Psoas muscle (tissue), 8 donors: ENCODE measurements at regions of chr4 and their contacts with region 1.

Region 1: DNA sequence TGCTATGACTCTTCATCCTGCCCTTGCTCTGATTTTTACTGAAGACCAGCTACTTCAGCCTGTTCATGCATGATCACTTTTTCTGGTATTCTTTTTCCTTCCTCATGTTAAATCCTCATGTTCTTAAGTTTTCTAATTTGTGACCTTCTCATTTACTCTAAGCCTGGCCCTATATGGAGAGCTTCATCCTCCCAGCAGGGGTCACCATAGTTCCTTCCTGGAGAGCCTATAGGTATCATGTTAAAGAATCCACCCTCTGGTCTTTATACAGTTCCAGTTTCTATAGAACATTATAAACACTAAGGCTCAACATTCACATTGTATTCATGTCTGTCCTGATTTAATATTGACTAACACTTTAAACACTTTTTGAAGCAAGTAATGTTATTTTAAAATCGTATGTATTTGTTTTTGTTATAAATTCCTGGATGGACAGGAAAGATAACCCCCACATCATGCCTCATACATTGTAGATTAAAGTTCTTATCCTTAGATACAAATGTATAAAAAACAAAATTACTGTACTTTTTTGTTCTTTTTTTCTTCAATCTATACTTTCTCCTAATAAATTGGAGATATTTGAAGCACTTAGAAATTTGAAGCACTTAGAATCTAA is 53.8 kb upstream of the OTUD4 start:
- DNase-seq: no peak
- ATAC-seq: peak; percentile 74 to 91 (median 81)
- H3K4me3 ChIP-seq: no peak overlapping the region
- H3K27ac ChIP-seq: no peak overlapping the region
- H3K4me1 ChIP-seq: peaks cover 12% of the 10 kb centered on the region
- H3K27me3 ChIP-seq: no peaks in the 10 kb centered on the region
- CTCF ChIP-seq: peak; percentile 82

Region 2: DNA sequence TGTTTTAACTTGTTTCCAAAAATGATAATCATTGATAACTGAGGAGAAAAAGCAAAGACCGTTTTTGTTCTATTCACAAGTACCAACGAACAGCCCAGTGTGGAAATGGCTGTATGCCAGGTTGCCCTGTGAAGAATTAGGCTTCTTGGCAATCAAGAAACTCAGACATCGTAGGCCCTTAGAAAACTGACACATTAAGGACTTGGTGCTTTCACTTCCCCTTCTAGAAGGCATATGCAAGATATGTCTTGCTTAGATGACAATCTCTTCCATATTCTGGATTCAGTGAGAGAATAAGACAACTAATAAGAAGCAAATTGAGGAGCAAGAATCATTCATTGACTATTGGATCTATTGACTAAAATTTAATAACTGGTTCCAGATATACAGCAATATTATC is 192.8 kb before region 1 on chr4:
- intact Hi-C with region 1: no loop called
- DNase-seq: no peak
- ATAC-seq: no peak
- H3K4me3 ChIP-seq: no peak overlapping the region
- H3K27ac ChIP-seq: no peak overlapping the region
- H3K4me1 ChIP-seq: no peaks in the 10 kb centered on the region
- H3K27me3 ChIP-seq: no peaks in the 10 kb centered on the region
- CTCF ChIP-seq: no peak

Region 3: DNA sequence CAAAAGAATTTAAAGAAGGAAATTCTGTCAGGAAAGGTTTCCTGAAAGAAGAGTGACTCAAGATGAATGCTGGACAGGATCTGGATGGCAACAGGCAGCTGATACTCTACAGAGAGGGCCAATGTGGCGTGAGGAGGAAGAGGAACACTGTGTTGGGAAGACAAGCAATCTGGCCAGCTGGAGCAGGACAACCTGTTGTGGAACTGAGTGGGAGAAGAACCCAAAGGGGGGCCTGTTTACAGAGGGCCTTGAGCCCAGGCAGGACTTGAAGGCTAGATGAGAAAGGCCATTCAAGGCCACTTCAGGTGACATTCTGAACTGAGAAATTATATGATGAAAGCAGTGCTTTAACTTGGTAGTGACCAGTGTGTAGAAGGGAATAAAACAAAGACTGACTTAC is 62.3 kb before region 1 on chr4:
- intact Hi-C with region 1: no loop called
- DNase-seq: no peak
- ATAC-seq: peak; percentile 50 to 74 (median 66)
- H3K4me3 ChIP-seq: no peak overlapping the region
- H3K27ac ChIP-seq: peak overlapping the region; percentile 38
- H3K4me1 ChIP-seq: peaks cover 35% of the 10 kb centered on the region
- H3K27me3 ChIP-seq: no peaks in the 10 kb centered on the region
- CTCF ChIP-seq: no peak

Region 4: DNA sequence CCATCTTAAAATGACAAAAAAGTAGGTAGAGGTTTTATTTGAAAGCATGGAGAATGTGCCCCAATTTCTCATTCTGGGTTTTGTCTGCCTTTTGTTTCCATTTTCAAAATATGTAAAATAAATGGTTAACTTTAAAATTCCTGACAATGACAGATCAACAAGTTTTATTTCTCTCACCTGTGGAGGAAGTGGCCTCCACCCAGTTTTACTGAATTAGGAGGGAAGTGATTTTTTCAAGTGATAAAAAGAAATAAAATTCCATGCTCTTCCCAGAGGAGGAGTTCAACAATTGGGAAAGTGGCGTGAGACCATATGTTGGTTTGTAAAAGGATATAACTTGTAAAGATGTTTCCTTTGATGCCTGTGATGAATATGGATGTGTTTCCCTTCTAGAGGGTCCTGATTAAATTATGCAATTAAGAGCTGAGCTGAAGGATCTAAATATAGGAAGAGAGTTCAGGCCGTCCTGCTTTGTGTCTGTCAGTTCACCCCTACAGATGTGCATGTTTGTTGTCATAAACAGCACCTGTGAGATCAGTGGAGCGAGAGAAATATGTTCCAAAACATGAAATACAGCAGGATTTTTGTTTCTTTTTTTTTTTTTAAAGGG is 267.0 kb after region 1 on chr4:
- intact Hi-C with region 1: no loop called
- DNase-seq: no peak
- ATAC-seq: peak in 1 of 4 donors; percentile 38
- H3K4me3 ChIP-seq: peak overlapping the region; percentile 4
- H3K27ac ChIP-seq: no peak overlapping the region
- H3K4me1 ChIP-seq: peaks cover 59% of the 10 kb centered on the region
- H3K27me3 ChIP-seq: no peaks in the 10 kb centered on the region
- CTCF ChIP-seq: no peak

Region 5: GRCh38 chr4:145557720-145558119 is 323.5 kb after region 1 on chr4:
- intact Hi-C with region 1: loop called (anchors 2 to 5 kb)
- DNase-seq: peak; percentile 44 to 55
- ATAC-seq: peak; percentile 72 to 97 (median 88)
- H3K4me3 ChIP-seq: no peak overlapping the region
- H3K27ac ChIP-seq: no peak overlapping the region
- H3K4me1 ChIP-seq: no peaks in the 10 kb centered on the region
- H3K27me3 ChIP-seq: no peaks in the 10 kb centered on the region
- CTCF ChIP-seq: peak; percentile 89

Region 6: DNA sequence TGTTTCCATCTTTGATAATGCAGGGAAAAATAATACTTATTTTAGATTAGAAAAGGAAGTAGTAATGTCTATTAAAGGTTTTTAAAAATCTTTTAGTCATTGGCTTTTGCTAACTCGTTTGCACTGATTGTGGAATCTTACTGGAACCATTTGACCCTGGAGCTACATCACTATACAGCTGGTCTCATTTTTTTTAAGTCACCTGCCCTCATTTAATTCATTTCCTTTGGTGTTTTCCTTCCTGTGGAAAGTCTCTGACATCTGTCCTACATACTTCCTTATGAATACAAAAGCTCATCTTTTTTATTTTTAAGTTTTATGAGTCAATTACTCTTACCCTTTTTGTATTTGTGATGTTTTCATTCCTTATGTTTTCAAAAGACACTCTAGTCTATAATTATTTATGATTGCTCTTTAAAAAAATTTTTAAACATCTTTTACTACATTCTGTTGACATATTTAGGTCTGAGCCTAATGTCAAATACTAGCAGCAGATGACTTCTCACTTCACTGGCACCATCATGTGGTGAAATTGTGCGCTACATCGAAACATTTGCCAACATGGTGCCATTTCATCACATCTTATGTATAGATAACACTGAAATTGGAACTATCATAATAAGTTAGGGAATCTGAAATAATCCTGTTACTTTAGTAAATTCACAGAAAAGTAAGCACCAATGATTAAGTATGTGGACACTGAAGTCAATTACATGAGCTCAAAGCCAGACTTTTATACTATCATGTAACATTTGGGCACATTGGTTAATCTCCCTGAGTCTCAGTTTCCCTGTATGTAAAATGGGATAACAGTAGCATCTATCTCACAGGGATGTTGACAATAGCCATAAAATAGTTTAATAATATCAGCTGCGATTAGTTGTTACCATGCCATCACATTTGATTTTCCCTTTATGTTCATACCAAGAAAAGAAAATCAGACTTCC is 375.6 kb after region 1 on chr4:
- intact Hi-C with region 1: loop called (anchors 2 to 5 kb)
- DNase-seq: peak in 1 of 2 donors; percentile 24
- ATAC-seq: peak; percentile 52 to 78 (median 66)
- H3K4me3 ChIP-seq: no peak overlapping the region
- H3K27ac ChIP-seq: no peak overlapping the region
- H3K4me1 ChIP-seq: no peaks in the 10 kb centered on the region
- H3K27me3 ChIP-seq: no peaks in the 10 kb centered on the region
- CTCF ChIP-seq: peak; percentile 78